ENCODE measurements at regions of chr20 and their contacts with region 1.

Region 1: GRCh38 chr20:36605399-36606157 is at the start of gene RAB5IF:
- DNase-seq: peak; percentile 98 to 100
- H3K4me3 ChIP-seq: peak within 1 kb of the TSS; percentile 87 to 100
- H3K27ac ChIP-seq: peak within 1 kb of the TSS; percentile 86 to 91
- H3K4me1 ChIP-seq: peaks cover 0 to 6% of the 10 kb centered on the region in 2 donors
- H3K27me3 ChIP-seq: no peaks in the 10 kb centered on the region
- CTCF ChIP-seq: peak; percentile 87 to 99 (median 93)
- POLR2A ChIP-seq: peak; percentile 59 to 84
- total RNA-seq, gene RAB5IF: 12.8 to 37.7 (median 28.5) TPM

Region 2: DNA sequence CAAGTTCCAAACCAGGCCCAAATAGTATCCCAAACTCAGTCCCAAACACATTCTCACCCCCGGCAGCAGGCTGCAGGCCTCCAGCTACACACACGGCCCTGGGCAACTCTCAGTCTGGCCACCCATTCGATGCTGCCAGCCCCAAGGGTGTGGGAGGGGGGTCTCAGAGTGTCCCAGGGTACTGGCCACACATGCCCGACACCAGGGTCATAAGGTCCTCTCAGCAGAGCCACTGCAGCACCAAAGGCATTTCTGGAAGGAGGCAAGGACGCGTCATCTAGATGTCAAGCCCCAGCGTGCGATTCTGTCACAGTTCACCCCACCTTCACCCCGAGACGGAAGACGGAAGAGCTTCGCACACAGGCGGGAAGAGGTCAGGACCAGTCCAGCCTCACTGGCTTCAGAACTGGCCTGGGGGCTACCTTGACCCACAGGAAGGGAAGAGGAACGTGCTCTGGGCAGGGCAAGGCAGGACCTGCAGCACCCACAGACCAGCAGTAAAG is 54.7 kb before region 1 on chr20:
- intact Hi-C with region 1: loop called (anchors 10 kb)
- DNase-seq: peak; percentile 50 to 58
- H3K4me3 ChIP-seq: no peak overlapping the region
- H3K27ac ChIP-seq: peak overlapping the region; percentile 22 to 46
- H3K4me1 ChIP-seq: peaks cover 0 to 7% of the 10 kb centered on the region in 2 donors
- H3K27me3 ChIP-seq: no peaks in the 10 kb centered on the region
- CTCF ChIP-seq: no peak
- POLR2A ChIP-seq: no peak

Measured in uterus (tissue), 4 donors.